IMR-90 (cell line): ENCODE measurements at regions of chr7 and their contacts with region 1.

Region 1: GRCh38 chr7:97027427-97028234 is 3.0 kb upstream of the DLX5 start:
- DNase-seq: peak; percentile 85
- ATAC-seq: peak; percentile 95
- H3K4me3 ChIP-seq: peak overlapping the region; percentile 2; the same call in 1 of the 2 replicates
- H3K27ac ChIP-seq: no peak overlapping the region
- H3K4me1 ChIP-seq: no peaks in the 10 kb centered on the region
- H3K27me3 ChIP-seq: peaks cover 45% of the 10 kb centered on the region
- CTCF ChIP-seq: peak; percentile 93
- POLR2A ChIP-seq: peak; percentile 36; the same call in 1 of the 2 replicates
- RAD21 ChIP-seq: peak; percentile 96

Region 2: GRCh38 chr7:95916573-95917297 is 1110.9 kb before region 1 on chr7:
- CTCF ChIA-PET with region 1: interaction called, 18 read pairs
- POLR2A ChIA-PET with region 1: no interaction called
- dilution Hi-C with region 1: no loop called
- in situ Hi-C with region 1: loop called (anchors 5 kb)
- intact Hi-C with region 1: loop called (anchors 1 kb)
- DNase-seq: peak; percentile 58
- ATAC-seq: peak; percentile 86
- H3K4me3 ChIP-seq: no peak overlapping the region
- H3K27ac ChIP-seq: no peak overlapping the region
- H3K4me1 ChIP-seq: no peaks in the 10 kb centered on the region
- H3K27me3 ChIP-seq: no peaks in the 10 kb centered on the region; the same call in 1 of the 2 replicates
- CTCF ChIP-seq: peak; percentile 94
- POLR2A ChIP-seq: no peak
- RAD21 ChIP-seq: peak; percentile 86

Region 3: GRCh38 chr7:95989301-95989700 is 1038.3 kb before region 1 on chr7:
- CTCF ChIA-PET with region 1: no interaction called
- POLR2A ChIA-PET with region 1: no interaction called
- dilution Hi-C with region 1: no loop called
- in situ Hi-C with region 1: no loop called
- intact Hi-C with region 1: no loop called
- DNase-seq: no peak
- ATAC-seq: no peak
- H3K4me3 ChIP-seq: no peak overlapping the region
- H3K27ac ChIP-seq: no peak overlapping the region
- H3K4me1 ChIP-seq: no peaks in the 10 kb centered on the region
- H3K27me3 ChIP-seq: no peaks in the 10 kb centered on the region
- CTCF ChIP-seq: no peak
- POLR2A ChIP-seq: no peak
- RAD21 ChIP-seq: no peak

Region 4: GRCh38 chr7:96075510-96076349 is 951.9 kb before region 1 on chr7:
- CTCF ChIA-PET with region 1: interaction called, 20 read pairs
- POLR2A ChIA-PET with region 1: no interaction called
- dilution Hi-C with region 1: no loop called
- in situ Hi-C with region 1: loop called (anchors 10 kb)
- intact Hi-C with region 1: loop called (anchors 1 kb)
- DNase-seq: peak; percentile 56
- ATAC-seq: peak; percentile 99
- H3K4me3 ChIP-seq: peak overlapping the region; percentile 58
- H3K27ac ChIP-seq: no peak overlapping the region
- H3K4me1 ChIP-seq: 0 out of 2 replicates have a peak, but pooled peaks cover 2% of the 10 kb centered on the region
- H3K27me3 ChIP-seq: peaks cover 10% of the 10 kb centered on the region
- CTCF ChIP-seq: peak; percentile 83
- POLR2A ChIP-seq: 0 out of 2 replicates have a peak, but pooled peaks have one; percentile 27
- RAD21 ChIP-seq: peak; percentile 86

Region 5: GRCh38 chr7:96328016-96328415 is 699.6 kb before region 1 on chr7:
- CTCF ChIA-PET with region 1: no interaction called
- POLR2A ChIA-PET with region 1: no interaction called
- dilution Hi-C with region 1: no loop called
- in situ Hi-C with region 1: no loop called
- intact Hi-C with region 1: loop called (anchors 2 kb)
- DNase-seq: no peak
- ATAC-seq: no peak
- H3K4me3 ChIP-seq: no peak overlapping the region
- H3K27ac ChIP-seq: no peak overlapping the region
- H3K4me1 ChIP-seq: no peaks in the 10 kb centered on the region
- H3K27me3 ChIP-seq: peaks cover 3% of the 10 kb centered on the region
- CTCF ChIP-seq: no peak
- POLR2A ChIP-seq: no peak
- RAD21 ChIP-seq: no peak

Region 6: GRCh38 chr7:96670338-96671289 is 357.0 kb before region 1 on chr7:
- CTCF ChIA-PET with region 1: no interaction called
- POLR2A ChIA-PET with region 1: no interaction called
- dilution Hi-C with region 1: no loop called
- in situ Hi-C with region 1: no loop called
- intact Hi-C with region 1: no loop called
- DNase-seq: no peak
- ATAC-seq: no peak; the same call in 1 of the 2 replicates
- H3K4me3 ChIP-seq: no peak overlapping the region
- H3K27ac ChIP-seq: no peak overlapping the region
- H3K4me1 ChIP-seq: no peaks in the 10 kb centered on the region
- H3K27me3 ChIP-seq: no peaks in the 10 kb centered on the region
- CTCF ChIP-seq: no peak
- POLR2A ChIP-seq: no peak
- RAD21 ChIP-seq: no peak

Region 7: GRCh38 chr7:96987719-96988118 is 39.9 kb before region 1 on chr7:
- CTCF ChIA-PET with region 1: interaction called, 14 read pairs
- POLR2A ChIA-PET with region 1: no interaction called
- dilution Hi-C with region 1: no loop called
- in situ Hi-C with region 1: no loop called
- intact Hi-C with region 1: no loop called
- DNase-seq: no peak
- ATAC-seq: no peak
- H3K4me3 ChIP-seq: no peak overlapping the region
- H3K27ac ChIP-seq: no peak overlapping the region
- H3K4me1 ChIP-seq: no peaks in the 10 kb centered on the region
- H3K27me3 ChIP-seq: peaks cover 22% of the 10 kb centered on the region
- CTCF ChIP-seq: no peak
- POLR2A ChIP-seq: no peak
- RAD21 ChIP-seq: no peak

Region 8: GRCh38 chr7:97307521-97308108 is 280.0 kb after region 1 on chr7:
- CTCF ChIA-PET with region 1: no interaction called
- POLR2A ChIA-PET with region 1: no interaction called
- dilution Hi-C with region 1: no loop called
- in situ Hi-C with region 1: no loop called
- intact Hi-C with region 1: no loop called
- DNase-seq: peak; percentile 0
- ATAC-seq: no peak
- H3K4me3 ChIP-seq: no peak overlapping the region
- H3K27ac ChIP-seq: no peak overlapping the region
- H3K4me1 ChIP-seq: no peaks in the 10 kb centered on the region
- H3K27me3 ChIP-seq: no peaks in the 10 kb centered on the region
- CTCF ChIP-seq: no peak
- POLR2A ChIP-seq: no peak
- RAD21 ChIP-seq: no peak